A673 (cell line): ENCODE measurements at regions of chr3 and their contacts with region 1.

Region 1: GRCh38 chr3:160413613-160414248 is 14.3 kb downstream of the SMC4 start:
- DNase-seq: peak; percentile 81
- H3K4me3 ChIP-seq: no peak overlapping the region
- H3K27ac ChIP-seq: no peak overlapping the region
- H3K4me1 ChIP-seq: no peaks in the 10 kb centered on the region
- H3K27me3 ChIP-seq: no peaks in the 10 kb centered on the region
- CTCF ChIP-seq: peak; percentile 84

Region 2: DNA sequence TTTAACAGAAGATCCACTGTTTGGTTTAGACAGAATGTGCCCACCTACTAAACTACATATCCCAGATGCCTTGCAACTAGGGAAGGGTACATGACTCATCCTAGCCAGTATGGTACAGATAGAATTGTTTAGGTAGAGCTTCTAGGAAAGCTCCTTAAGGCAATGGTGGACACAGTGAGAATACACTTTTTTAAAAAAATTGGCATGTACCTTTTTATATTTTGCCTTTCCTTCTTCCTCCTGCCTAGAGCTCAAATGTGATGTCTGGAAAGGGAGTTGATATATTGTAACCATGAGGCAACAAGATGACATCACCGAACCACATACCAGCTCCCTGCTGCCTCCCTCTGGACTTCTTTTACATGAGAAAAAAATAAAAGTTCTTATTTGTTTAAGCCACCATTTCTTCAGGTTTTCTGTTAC is 202.9 kb before region 1 on chr3:
- CTCF ChIA-PET with region 1: no interaction called
- POLR2A ChIA-PET with region 1: no interaction called
- intact Hi-C with region 1: no loop called
- DNase-seq: peak; percentile 72
- H3K4me3 ChIP-seq: no peak overlapping the region
- H3K27ac ChIP-seq: no peak overlapping the region
- H3K4me1 ChIP-seq: peaks cover 5% of the 10 kb centered on the region
- H3K27me3 ChIP-seq: peaks cover 7% of the 10 kb centered on the region
- CTCF ChIP-seq: peak; percentile 55

Region 3: GRCh38 chr3:160372780-160373179 is 41.0 kb before region 1 on chr3:
- CTCF ChIA-PET with region 1: no interaction called
- POLR2A ChIA-PET with region 1: interaction called, 10 read pairs
- intact Hi-C with region 1: no loop called
- DNase-seq: no peak
- H3K4me3 ChIP-seq: no peak overlapping the region
- H3K27ac ChIP-seq: no peak overlapping the region
- H3K4me1 ChIP-seq: no peaks in the 10 kb centered on the region
- H3K27me3 ChIP-seq: no peaks in the 10 kb centered on the region
- CTCF ChIP-seq: no peak

Region 4: GRCh38 chr3:160434071-160434470 is 20.3 kb after region 1 on chr3:
- CTCF ChIA-PET with region 1: no interaction called
- POLR2A ChIA-PET with region 1: interaction called, 12 read pairs
- intact Hi-C with region 1: no loop called
- DNase-seq: no peak
- H3K4me3 ChIP-seq: no peak overlapping the region
- H3K27ac ChIP-seq: no peak overlapping the region
- H3K4me1 ChIP-seq: no peaks in the 10 kb centered on the region
- H3K27me3 ChIP-seq: no peaks in the 10 kb centered on the region
- CTCF ChIP-seq: no peak